Activated T-helper 2 cell treated with anti-CD3 and anti-CD28 coated beads, Interferon-gamma antibody, Interleukin-2, Interleukin-4, amounts not matched to agents 10 μg/mL and 5 μg/mL and 100 μg/mL, durations not matched to agents 14 hours and 24 hours and 36 hours (primary cell): ENCODE measurements at regions of chr2 and their contacts with region 1.

Region 1: GRCh38 chr2:15939854-15940660 is at the start of gene MYCN:
- DNase-seq: peak; percentile 14
- H3K4me3 Mint-ChIP-seq: peak within 1 kb of the TSS; percentile 42
- H3K27ac Mint-ChIP-seq: no peak within 1 kb of the TSS
- H3K4me1 Mint-ChIP-seq: peaks cover 5% of the 10 kb centered on the region
- H3K27me3 Mint-ChIP-seq: peaks cover 66% of the 10 kb centered on the region
- total RNA-seq, gene MYCN: not detected in 2 replicates

Region 2: DNA sequence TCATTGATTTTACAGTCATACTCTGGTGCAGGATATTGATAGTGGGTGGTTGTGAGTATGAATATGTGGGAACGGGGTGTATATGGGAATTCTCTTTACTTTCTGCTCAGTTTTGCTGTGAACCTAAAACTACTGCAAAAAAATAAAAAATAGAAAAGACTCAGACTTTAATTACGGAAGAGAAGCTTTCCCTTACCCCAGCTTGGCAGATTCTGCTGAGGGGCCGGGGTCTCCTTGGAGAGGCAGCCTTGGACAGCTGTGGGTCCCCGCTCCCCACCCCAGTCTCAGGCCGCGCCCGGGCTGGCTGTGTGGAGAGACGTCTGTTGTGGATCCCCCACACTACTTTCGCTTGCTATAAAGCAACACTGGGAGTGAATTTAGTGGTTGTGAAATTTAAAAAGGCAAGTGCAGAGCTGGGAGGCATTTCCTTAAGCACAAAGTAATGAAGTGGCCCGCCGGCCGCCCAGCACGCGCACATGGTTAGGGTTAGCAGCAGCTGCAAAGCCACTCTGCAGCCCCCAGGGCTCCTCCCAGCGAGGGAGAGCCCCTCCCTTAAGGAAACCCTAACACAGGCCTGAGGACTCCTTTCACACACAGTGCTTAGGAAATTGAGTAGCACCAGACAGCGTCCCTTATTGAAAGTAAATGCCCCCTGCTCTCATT is 246.0 kb before region 1 on chr2:
- intact Hi-C with region 1: no loop called
- DNase-seq: no peak
- H3K4me3 Mint-ChIP-seq: no peak overlapping the region
- H3K27ac Mint-ChIP-seq: no peak overlapping the region
- H3K4me1 Mint-ChIP-seq: no peaks in the 10 kb centered on the region
- H3K27me3 Mint-ChIP-seq: no peaks in the 10 kb centered on the region

Region 3: GRCh38 chr2:15867194-15868171 is 72.6 kb before region 1 on chr2:
- intact Hi-C with region 1: no loop called
- DNase-seq: no peak
- H3K4me3 Mint-ChIP-seq: no peak overlapping the region
- H3K27ac Mint-ChIP-seq: no peak overlapping the region
- H3K4me1 Mint-ChIP-seq: no peaks in the 10 kb centered on the region
- H3K27me3 Mint-ChIP-seq: no peaks in the 10 kb centered on the region

Region 4: GRCh38 chr2:16281451-16282336 is 341.6 kb after region 1 on chr2:
- intact Hi-C with region 1: loop called (anchors 1 kb)
- DNase-seq: no peak
- H3K4me3 Mint-ChIP-seq: no peak overlapping the region
- H3K27ac Mint-ChIP-seq: no peak overlapping the region
- H3K4me1 Mint-ChIP-seq: no peaks in the 10 kb centered on the region
- H3K27me3 Mint-ChIP-seq: no peaks in the 10 kb centered on the region

Region 5: DNA sequence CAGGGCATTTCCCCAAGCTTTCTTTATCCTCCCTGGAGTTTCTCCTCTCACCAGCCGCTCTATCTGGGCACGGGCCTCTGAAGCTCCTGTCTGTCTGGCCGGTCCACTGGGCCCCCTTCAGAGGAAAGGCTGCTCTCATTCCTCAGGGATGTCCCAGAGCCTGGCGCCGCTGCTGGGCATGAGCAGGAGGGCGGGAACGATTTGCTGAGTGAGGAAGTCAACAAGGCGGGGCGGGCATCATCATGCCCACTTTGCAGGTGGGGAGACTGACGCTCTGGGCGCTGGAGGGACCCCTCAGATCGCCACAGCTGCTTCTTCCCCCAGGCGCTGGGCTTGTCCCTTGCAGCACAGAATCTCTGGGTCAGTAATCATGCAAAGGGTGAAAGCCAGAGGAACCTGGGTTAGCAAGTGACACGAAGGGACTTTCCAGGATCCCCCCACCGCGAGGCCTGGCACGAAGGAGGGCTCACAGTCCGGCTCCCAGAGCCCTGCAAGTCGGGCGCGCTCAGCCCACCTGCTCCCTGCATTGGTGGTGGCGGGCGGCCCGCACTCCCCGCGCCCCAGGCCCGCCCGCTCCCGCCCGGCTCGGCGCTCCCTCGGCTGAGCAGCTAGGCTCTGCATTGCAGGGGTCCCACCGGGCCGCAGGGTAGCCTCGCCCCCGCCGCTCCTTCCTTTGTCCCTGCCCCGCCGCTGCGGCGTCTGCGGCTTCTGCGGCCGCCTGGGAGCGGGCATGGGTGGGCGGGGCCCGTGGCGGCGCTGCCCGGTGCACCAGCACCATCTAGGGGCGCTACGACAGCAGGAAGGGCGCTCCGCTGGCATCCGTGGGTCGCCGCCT is 567.8 kb after region 1 on chr2:
- intact Hi-C with region 1: loop called (anchors 10 kb)
- DNase-seq: no peak
- H3K4me3 Mint-ChIP-seq: no peak overlapping the region
- H3K27ac Mint-ChIP-seq: no peak overlapping the region
- H3K4me1 Mint-ChIP-seq: no peaks in the 10 kb centered on the region
- H3K27me3 Mint-ChIP-seq: peaks cover 27% of the 10 kb centered on the region

Region 6: GRCh38 chr2:16756831-16757644 is 817.0 kb after region 1 on chr2:
- intact Hi-C with region 1: loop called (anchors 10 kb)
- DNase-seq: peak; percentile 48
- H3K4me3 Mint-ChIP-seq: no peak overlapping the region
- H3K27ac Mint-ChIP-seq: no peak overlapping the region
- H3K4me1 Mint-ChIP-seq: no peaks in the 10 kb centered on the region
- H3K27me3 Mint-ChIP-seq: peaks cover 8% of the 10 kb centered on the region